Caco-2 (cell line): ENCODE measurements at regions of chr1 and their contacts with region 1.

Region 1: GRCh38 chr1:56491441-56491840 is 87.9 kb downstream of the PLPP3 start:
- DNase-seq: no peak
- H3K4me3 ChIP-seq: no peak overlapping the region
- H3K4me3 Mint-ChIP-seq: no peak overlapping the region
- H3K27ac Mint-ChIP-seq: peak overlapping the region; percentile 48
- H3K4me1 ChIP-seq: peaks cover 36% of the 10 kb centered on the region
- H3K4me1 Mint-ChIP-seq: peaks cover 43% of the 10 kb centered on the region
- H3K27me3 ChIP-seq: no peaks in the 10 kb centered on the region
- H3K27me3 Mint-ChIP-seq: no peaks in the 10 kb centered on the region
- CTCF ChIP-seq: no peak

Region 2: DNA sequence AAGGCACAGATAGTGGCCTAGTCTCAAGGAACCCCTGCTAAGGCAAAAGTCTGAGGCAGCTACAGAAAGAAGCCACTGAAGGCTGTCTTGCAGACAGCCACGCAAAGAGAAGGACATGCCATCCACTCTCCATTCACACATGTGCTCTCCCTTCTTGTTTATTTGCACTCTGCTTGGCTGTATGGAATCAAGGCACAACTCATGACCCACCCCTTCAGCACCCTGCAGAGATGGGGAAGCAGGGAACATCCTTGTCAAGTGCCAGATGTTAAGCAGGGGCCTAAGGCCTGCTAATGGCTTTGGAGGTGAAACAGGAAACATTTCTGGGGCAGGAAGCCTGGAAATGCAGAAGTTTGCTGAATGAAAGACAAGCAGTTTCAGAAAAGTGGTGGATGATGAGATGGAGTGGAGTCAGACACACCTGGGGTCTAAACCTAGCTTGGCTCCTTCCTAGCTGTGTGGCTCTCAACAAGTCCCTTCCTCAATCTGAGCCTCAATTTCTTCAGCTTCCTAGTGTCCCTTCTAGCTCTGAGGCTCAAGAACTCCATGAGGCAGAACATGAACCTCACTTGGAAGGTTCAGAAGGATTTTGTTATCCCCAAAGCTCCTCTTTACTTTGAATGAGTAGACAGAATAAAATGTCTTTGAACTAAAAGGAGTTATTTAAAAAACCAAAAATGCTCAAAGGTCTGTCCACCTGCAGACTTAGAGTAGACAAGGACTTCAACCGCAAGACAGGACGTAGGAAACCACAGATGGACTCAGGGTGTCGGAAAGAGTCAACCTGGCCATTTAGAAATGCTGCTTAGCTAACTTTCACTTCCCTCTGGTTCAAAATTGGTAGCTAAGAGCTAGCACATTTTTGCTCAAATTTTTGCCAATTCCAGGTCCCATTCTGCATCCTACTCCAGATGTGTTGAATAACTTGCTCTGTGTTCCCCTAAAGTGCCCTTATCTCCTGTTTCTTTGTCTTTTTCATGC is 195.2 kb before region 1 on chr1:
- CTCF ChIA-PET with region 1: no interaction called
- POLR2A ChIA-PET with region 1: no interaction called
- intact Hi-C with region 1: loop called (anchors 1 kb)
- DNase-seq: no peak
- H3K4me3 ChIP-seq: no peak overlapping the region
- H3K4me3 Mint-ChIP-seq: peak overlapping the region; percentile 22
- H3K27ac Mint-ChIP-seq: peak overlapping the region; percentile 93
- H3K4me1 ChIP-seq: peaks cover 58% of the 10 kb centered on the region
- H3K4me1 Mint-ChIP-seq: peaks cover 29% of the 10 kb centered on the region
- H3K27me3 ChIP-seq: no peaks in the 10 kb centered on the region
- H3K27me3 Mint-ChIP-seq: no peaks in the 10 kb centered on the region
- CTCF ChIP-seq: no peak

Region 3: GRCh38 chr1:56434740-56435139 is 56.7 kb before region 1 on chr1:
- CTCF ChIA-PET with region 1: no interaction called
- POLR2A ChIA-PET with region 1: no interaction called
- intact Hi-C with region 1: loop called (anchors 1 kb)
- DNase-seq: peak in 1 of 2 experiments; percentile 36
- H3K4me3 ChIP-seq: no peak overlapping the region
- H3K4me3 Mint-ChIP-seq: peak overlapping the region; percentile 25
- H3K27ac Mint-ChIP-seq: peak overlapping the region; percentile 92
- H3K4me1 ChIP-seq: peaks cover 70% of the 10 kb centered on the region
- H3K4me1 Mint-ChIP-seq: peaks cover 62% of the 10 kb centered on the region
- H3K27me3 ChIP-seq: no peaks in the 10 kb centered on the region
- H3K27me3 Mint-ChIP-seq: no peaks in the 10 kb centered on the region
- CTCF ChIP-seq: no peak

Region 4: DNA sequence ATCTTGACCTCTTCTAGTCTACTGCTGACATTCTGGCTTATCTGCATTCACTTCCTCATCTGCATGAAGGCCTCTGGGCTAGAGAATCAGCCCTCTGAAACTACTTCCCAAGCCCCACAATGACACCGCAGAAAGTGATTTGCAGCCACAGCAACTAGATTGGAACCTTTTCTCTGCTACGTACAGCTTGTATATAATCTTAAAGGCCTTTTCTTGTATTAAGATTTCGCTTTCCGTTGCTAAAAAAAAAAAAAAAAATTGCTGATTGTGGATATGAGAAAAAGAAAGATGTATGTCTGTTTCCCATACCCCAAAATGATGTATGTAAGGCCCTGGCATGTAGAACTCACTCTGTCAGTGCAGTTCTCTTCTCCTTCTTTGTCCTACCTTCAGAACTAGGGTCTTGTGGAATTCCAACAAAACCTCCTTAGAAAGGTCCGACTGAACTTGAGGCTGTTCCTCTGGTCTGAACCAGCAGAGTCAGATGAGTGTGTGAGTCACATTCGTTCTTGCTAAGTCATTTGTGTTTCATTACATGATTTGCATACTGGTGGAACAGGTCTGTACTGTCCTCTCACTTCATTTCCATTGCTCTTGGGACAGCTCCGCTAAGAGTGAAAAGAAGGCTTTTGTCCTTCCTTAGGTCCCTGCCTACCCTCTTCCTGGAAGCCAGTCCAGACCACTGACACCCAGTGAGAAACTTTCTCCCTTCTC is 25.3 kb after region 1 on chr1:
- CTCF ChIA-PET with region 1: no interaction called
- POLR2A ChIA-PET with region 1: no interaction called
- intact Hi-C with region 1: loop called (anchors 1 kb)
- DNase-seq: peak; percentile 62 to 70
- H3K4me3 ChIP-seq: no peak overlapping the region
- H3K4me3 Mint-ChIP-seq: peak overlapping the region; percentile 47
- H3K27ac Mint-ChIP-seq: peak overlapping the region; percentile 42
- H3K4me1 ChIP-seq: peaks cover 39% of the 10 kb centered on the region
- H3K4me1 Mint-ChIP-seq: peaks cover 33% of the 10 kb centered on the region
- H3K27me3 ChIP-seq: no peaks in the 10 kb centered on the region
- H3K27me3 Mint-ChIP-seq: no peaks in the 10 kb centered on the region
- CTCF ChIP-seq: no peak

Region 5: DNA sequence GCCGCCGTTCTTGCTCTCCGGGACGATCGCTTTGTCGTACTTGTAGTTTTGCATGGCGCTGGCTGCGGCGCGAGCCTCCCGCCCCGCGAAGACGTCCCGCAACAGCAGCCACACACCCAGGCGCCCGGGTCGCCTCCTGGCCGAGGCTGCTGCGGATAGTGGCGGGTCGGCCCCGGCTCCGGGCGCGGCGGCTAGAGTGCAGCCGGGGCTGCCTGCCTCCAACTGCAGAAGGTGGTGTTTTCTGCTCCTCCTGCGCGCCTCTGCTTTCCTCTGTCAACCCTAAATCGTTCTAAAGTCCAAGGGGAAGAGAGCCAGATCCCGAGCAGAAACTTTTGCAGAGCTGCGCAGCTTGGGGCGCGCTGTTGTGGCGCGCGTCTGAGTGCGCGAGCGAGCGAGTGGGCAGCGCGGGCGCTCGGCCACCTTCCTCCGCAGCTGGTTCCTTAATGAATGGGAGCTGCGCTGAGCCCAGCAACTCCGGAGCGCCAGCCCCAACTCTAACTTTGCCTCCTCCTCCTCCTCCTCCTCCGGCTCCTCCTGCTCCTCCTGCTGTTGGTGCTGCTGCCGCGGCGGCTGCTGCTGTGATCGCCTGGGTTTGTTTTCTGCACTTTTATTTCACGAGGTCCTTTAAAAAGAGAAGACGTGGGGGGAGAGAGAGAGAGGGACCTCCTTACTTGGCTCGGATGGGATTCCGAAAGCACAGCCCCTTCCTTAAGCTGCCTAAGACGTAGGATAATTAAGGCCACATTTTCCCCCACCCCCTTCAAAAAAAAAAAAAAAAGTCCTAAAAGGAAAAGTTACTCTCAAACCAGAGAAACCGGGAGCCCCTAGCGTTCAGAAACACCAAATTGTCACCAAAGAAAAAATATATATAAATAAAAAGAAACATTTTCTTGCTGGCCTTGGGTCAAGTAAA is 87.8 kb after region 1 on chr1 and contains the start of gene PLPP3:
- CTCF ChIA-PET with region 1: no interaction called
- POLR2A ChIA-PET with region 1: interaction called, 3 read pairs
- intact Hi-C with region 1: loop called (anchors 5 kb)
- DNase-seq: peak; percentile 80 to 85
- H3K4me3 ChIP-seq: peak within 1 kb of the TSS; percentile 76
- H3K4me3 Mint-ChIP-seq: peak within 1 kb of the TSS; percentile 94
- H3K27ac Mint-ChIP-seq: peak within 1 kb of the TSS; percentile 97
- H3K4me1 ChIP-seq: peaks cover 24% of the 10 kb centered on the region
- H3K4me1 Mint-ChIP-seq: peaks cover 11% of the 10 kb centered on the region
- H3K27me3 ChIP-seq: no peaks in the 10 kb centered on the region
- H3K27me3 Mint-ChIP-seq: no peaks in the 10 kb centered on the region
- CTCF ChIP-seq: peak; percentile 8 to 51
- total RNA-seq, gene PLPP3: 39.2 and 41.0 TPM in 2 replicates

Region 6: DNA sequence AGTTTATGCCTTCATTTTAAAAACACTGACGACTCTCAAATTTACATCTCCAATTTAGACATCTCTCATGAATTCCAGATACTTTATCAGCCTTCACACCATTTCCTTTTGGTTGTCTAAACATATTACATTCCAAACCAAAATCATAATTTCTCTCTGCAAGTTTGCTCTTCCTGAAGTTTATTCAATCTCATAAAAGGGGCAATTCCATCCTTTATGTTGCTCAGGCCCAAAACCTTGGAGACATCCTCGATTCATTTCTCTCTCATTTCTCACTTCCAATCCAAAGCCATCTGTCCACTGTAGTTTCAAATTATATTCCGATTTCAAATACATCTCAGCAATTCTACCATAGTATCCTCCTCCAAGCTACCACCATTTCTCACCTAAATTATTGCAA is 253.8 kb after region 1 on chr1:
- CTCF ChIA-PET with region 1: no interaction called
- POLR2A ChIA-PET with region 1: no interaction called
- intact Hi-C with region 1: no loop called
- DNase-seq: no peak
- H3K4me3 ChIP-seq: no peak overlapping the region
- H3K4me3 Mint-ChIP-seq: no peak overlapping the region
- H3K27ac Mint-ChIP-seq: no peak overlapping the region
- H3K4me1 ChIP-seq: no peaks in the 10 kb centered on the region
- H3K4me1 Mint-ChIP-seq: peaks cover 11% of the 10 kb centered on the region
- H3K27me3 ChIP-seq: no peaks in the 10 kb centered on the region
- H3K27me3 Mint-ChIP-seq: no peaks in the 10 kb centered on the region
- CTCF ChIP-seq: no peak

Region 7: GRCh38 chr1:56821140-56821797 is 329.8 kb after region 1 on chr1:
- CTCF ChIA-PET with region 1: no interaction called
- POLR2A ChIA-PET with region 1: no interaction called
- intact Hi-C with region 1: no loop called
- DNase-seq: peak; percentile 82 to 86
- H3K4me3 ChIP-seq: no peak overlapping the region
- H3K4me3 Mint-ChIP-seq: no peak overlapping the region
- H3K27ac Mint-ChIP-seq: no peak overlapping the region
- H3K4me1 ChIP-seq: peaks cover 39% of the 10 kb centered on the region
- H3K4me1 Mint-ChIP-seq: peaks cover 24% of the 10 kb centered on the region
- H3K27me3 ChIP-seq: no peaks in the 10 kb centered on the region
- H3K27me3 Mint-ChIP-seq: no peaks in the 10 kb centered on the region
- CTCF ChIP-seq: peak; percentile 73 to 78